ENCODE measurements at regions of chr4 and their contacts with region 1.

Region 1: GRCh38 chr4:186979961-186980745 is 256.5 kb upstream of the FAT1 start:
- DNase-seq: no peak
- ATAC-seq: no peak
- H3K4me3 ChIP-seq: no peak overlapping the region
- H3K27ac ChIP-seq: no peak overlapping the region
- H3K4me1 ChIP-seq: no peaks in the 10 kb centered on the region
- H3K27me3 ChIP-seq: peaks cover 0 to 4% of the 10 kb centered on the region in 2 experiments; a peak in 2 of 5 replicates
- CTCF ChIP-seq: no peak
- EP300 ChIP-seq: no peak
- POLR2A ChIP-seq: no peak
- RAD21 ChIP-seq: no peak

Region 2: GRCh38 chr4:186946682-186947294 is 33.4 kb before region 1 on chr4:
- CTCF ChIA-PET with region 1: no interaction called
- POLR2A ChIA-PET with region 1: interaction called, 3 read pairs
- in situ Hi-C with region 1: loop called (anchors 5 kb)
- intact Hi-C with region 1: no loop called
- DNase-seq: peak; percentile 22 to 58 (median 37)
- ATAC-seq: peak; percentile 98
- H3K4me3 ChIP-seq: no peak overlapping the region
- H3K27ac ChIP-seq: no peak overlapping the region
- H3K4me1 ChIP-seq: peaks cover 0 to 4% of the 10 kb centered on the region in 2 experiments; a peak in 1 of 5 replicates
- H3K27me3 ChIP-seq: peaks cover 7 to 25% of the 10 kb centered on the region in 2 experiments; a peak in 3 of 5 replicates
- CTCF ChIP-seq: peak; percentile 58 to 84 (median 70); a peak in 5 of 6 replicates
- EP300 ChIP-seq: no peak
- POLR2A ChIP-seq: no peak
- RAD21 ChIP-seq: peak; percentile 33 to 66; a peak in 2 of 4 replicates

Measured in K562 (cell line).